ENCODE measurements at regions of chr10 and their contacts with region 1.

Region 1: GRCh38 chr10:61903221-61903927 is 1.9 kb downstream of the ARID5B start:
- DNase-seq: peak; percentile 42 to 84 (median 62)
- ATAC-seq: peak; percentile 33
- H3K4me3 ChIP-seq: peak overlapping the region; percentile 92
- H3K4me3 Mint-ChIP-seq: peak overlapping the region; percentile 94
- H3K27ac ChIP-seq: peak overlapping the region; percentile 92 to 98
- H3K27ac Mint-ChIP-seq: peak overlapping the region; percentile 91
- H3K4me1 ChIP-seq: peaks cover 4% of the 10 kb centered on the region
- H3K4me1 Mint-ChIP-seq: peaks cover 51% of the 10 kb centered on the region
- H3K27me3 ChIP-seq: no peaks in the 10 kb centered on the region
- H3K27me3 Mint-ChIP-seq: no peaks in the 10 kb centered on the region
- CTCF ChIP-seq: peak; percentile 49

Region 2: GRCh38 chr10:61750929-61751471 is 152.4 kb before region 1 on chr10:
- CTCF ChIA-PET with region 1: interaction called, 7 read pairs
- POLR2A ChIA-PET with region 1: interaction called, 9 read pairs
- intact Hi-C with region 1: loop called in 1 of 2 experiments (anchors 5 kb)
- DNase-seq: peak; percentile 45 to 83 (median 58)
- ATAC-seq: peak; percentile 97
- H3K4me3 ChIP-seq: no peak overlapping the region
- H3K4me3 Mint-ChIP-seq: peak overlapping the region; percentile 18
- H3K27ac ChIP-seq: no peak overlapping the region
- H3K27ac Mint-ChIP-seq: no peak overlapping the region
- H3K4me1 ChIP-seq: peaks cover 14% of the 10 kb centered on the region
- H3K4me1 Mint-ChIP-seq: peaks cover 29% of the 10 kb centered on the region
- H3K27me3 ChIP-seq: no peaks in the 10 kb centered on the region
- H3K27me3 Mint-ChIP-seq: no peaks in the 10 kb centered on the region
- CTCF ChIP-seq: peak; percentile 75

Region 3: GRCh38 chr10:61921143-61921542 is 17.8 kb after region 1 on chr10:
- CTCF ChIA-PET with region 1: interaction called, 3 read pairs
- POLR2A ChIA-PET with region 1: interaction called, 20 read pairs
- intact Hi-C with region 1: no loop called
- DNase-seq: no peak
- ATAC-seq: no peak
- H3K4me3 ChIP-seq: no peak overlapping the region
- H3K4me3 Mint-ChIP-seq: no peak overlapping the region
- H3K27ac ChIP-seq: no peak overlapping the region
- H3K27ac Mint-ChIP-seq: no peak overlapping the region
- H3K4me1 ChIP-seq: peaks cover 19% of the 10 kb centered on the region
- H3K4me1 Mint-ChIP-seq: peaks cover 72% of the 10 kb centered on the region
- H3K27me3 ChIP-seq: no peaks in the 10 kb centered on the region
- H3K27me3 Mint-ChIP-seq: no peaks in the 10 kb centered on the region
- CTCF ChIP-seq: no peak

Region 4: DNA sequence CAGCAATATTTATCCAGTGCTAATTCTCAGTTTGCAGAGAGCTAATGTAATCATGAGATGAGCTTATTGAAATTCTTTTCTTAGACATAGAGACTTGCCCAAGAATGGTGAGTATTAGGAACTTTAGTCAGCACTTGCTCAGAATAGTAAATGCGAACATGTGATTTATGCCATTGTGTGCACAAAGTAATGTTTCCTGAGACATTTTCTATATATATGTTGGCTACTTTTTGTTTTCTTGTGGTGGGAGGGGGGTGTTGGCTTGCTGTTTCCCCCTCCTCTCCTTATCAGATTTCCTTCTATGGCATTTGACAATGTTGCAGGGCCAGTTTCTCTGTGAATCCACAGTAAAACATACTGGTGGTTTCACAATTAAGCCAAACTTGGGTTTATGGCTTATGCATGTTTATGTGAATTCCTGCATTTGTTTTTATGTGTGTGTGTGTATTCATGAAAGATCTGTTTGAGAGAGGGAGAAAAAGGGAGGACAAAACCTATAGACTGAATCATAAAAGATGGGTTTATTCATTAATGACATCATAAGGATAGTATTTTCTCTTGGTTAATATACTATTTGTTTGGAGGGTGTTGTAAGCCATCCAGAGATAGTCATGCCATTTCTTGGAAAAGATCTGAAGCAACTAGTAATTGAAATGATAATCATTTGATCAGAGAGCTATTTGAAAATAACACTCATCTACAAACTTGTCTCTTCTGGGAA is 34.4 kb after region 1 on chr10:
- CTCF ChIA-PET with region 1: interaction called, 8 read pairs
- POLR2A ChIA-PET with region 1: interaction called, 28 read pairs
- intact Hi-C with region 1: loop called in 1 of 2 experiments (anchors 2 kb)
- DNase-seq: no peak
- ATAC-seq: no peak
- H3K4me3 ChIP-seq: no peak overlapping the region
- H3K4me3 Mint-ChIP-seq: no peak overlapping the region
- H3K27ac ChIP-seq: peak overlapping the region in 1 of 2 donors; percentile 46
- H3K27ac Mint-ChIP-seq: peak overlapping the region; percentile 82
- H3K4me1 ChIP-seq: peaks cover 40% of the 10 kb centered on the region
- H3K4me1 Mint-ChIP-seq: peaks cover 83% of the 10 kb centered on the region
- H3K27me3 ChIP-seq: no peaks in the 10 kb centered on the region
- H3K27me3 Mint-ChIP-seq: no peaks in the 10 kb centered on the region
- CTCF ChIP-seq: no peak

Region 5: GRCh38 chr10:61987951-61988379 is 84.6 kb after region 1 on chr10:
- CTCF ChIA-PET with region 1: interaction called, 14 read pairs
- POLR2A ChIA-PET with region 1: interaction called, 51 read pairs
- intact Hi-C with region 1: loop called (anchors 1 to 5 kb)
- DNase-seq: peak in 3 of 14 experiments; percentile 61 to 70 (median 63)
- ATAC-seq: peak; percentile 59
- H3K4me3 ChIP-seq: peak overlapping the region; percentile 17
- H3K4me3 Mint-ChIP-seq: peak overlapping the region; percentile 18
- H3K27ac ChIP-seq: peak overlapping the region in 1 of 2 donors; percentile 47
- H3K27ac Mint-ChIP-seq: peak overlapping the region; percentile 78
- H3K4me1 ChIP-seq: peaks cover 24% of the 10 kb centered on the region
- H3K4me1 Mint-ChIP-seq: peaks cover 68% of the 10 kb centered on the region
- H3K27me3 ChIP-seq: no peaks in the 10 kb centered on the region
- H3K27me3 Mint-ChIP-seq: no peaks in the 10 kb centered on the region
- CTCF ChIP-seq: no peak

Region 6: DNA sequence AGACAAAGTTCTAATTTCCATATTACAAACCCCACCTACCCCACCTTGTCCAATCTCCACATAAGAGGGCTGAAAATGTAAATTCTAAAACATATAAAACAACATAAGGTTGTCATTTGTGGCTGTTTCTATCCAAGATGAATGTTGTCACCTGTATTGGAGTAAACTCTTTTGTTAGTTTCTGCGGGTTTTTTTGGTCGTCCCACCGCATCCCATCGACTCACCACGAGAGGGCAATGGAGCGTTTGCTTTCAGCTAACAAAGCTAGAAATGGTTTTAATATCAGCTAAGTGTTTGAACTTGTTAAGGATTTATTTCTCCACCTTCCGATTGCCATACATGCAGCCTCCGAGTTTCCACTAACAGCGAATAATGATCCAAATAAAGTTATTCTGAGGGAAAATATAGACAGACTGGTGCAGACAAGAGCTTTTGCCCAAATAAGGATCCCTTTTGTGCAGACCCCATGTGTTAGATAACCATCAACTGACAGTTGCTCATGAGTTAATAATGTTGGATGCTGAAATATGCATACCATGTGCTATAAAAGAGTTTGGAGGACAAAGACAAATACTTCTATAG is 135.3 kb after region 1 on chr10:
- CTCF ChIA-PET with region 1: interaction called, 20 read pairs
- POLR2A ChIA-PET with region 1: interaction called, 103 read pairs
- intact Hi-C with region 1: loop called (anchors 5 kb)
- DNase-seq: peak; percentile 65 to 88 (median 72)
- ATAC-seq: peak; percentile 84
- H3K4me3 ChIP-seq: peak overlapping the region; percentile 29
- H3K4me3 Mint-ChIP-seq: peak overlapping the region; percentile 72
- H3K27ac ChIP-seq: no peak overlapping the region
- H3K27ac Mint-ChIP-seq: peak overlapping the region; percentile 68
- H3K4me1 ChIP-seq: peaks cover 54% of the 10 kb centered on the region
- H3K4me1 Mint-ChIP-seq: peaks cover 87% of the 10 kb centered on the region
- H3K27me3 ChIP-seq: no peaks in the 10 kb centered on the region
- H3K27me3 Mint-ChIP-seq: no peaks in the 10 kb centered on the region
- CTCF ChIP-seq: peak; percentile 82

Region 7: GRCh38 chr10:62183442-62183841 is 280.1 kb after region 1 on chr10:
- CTCF ChIA-PET with region 1: interaction called, 3 read pairs
- POLR2A ChIA-PET with region 1: interaction called, 27 read pairs
- intact Hi-C with region 1: loop called in 1 of 2 experiments (anchors 1 kb)
- DNase-seq: peak in 10 of 14 experiments; percentile 16 to 92 (median 37)
- ATAC-seq: peak; percentile 85
- H3K4me3 ChIP-seq: no peak overlapping the region
- H3K4me3 Mint-ChIP-seq: peak overlapping the region; percentile 21
- H3K27ac ChIP-seq: peak overlapping the region; percentile 37 to 38
- H3K27ac Mint-ChIP-seq: peak overlapping the region; percentile 86
- H3K4me1 ChIP-seq: peaks cover 45% of the 10 kb centered on the region
- H3K4me1 Mint-ChIP-seq: peaks cover 91% of the 10 kb centered on the region
- H3K27me3 ChIP-seq: no peaks in the 10 kb centered on the region
- H3K27me3 Mint-ChIP-seq: no peaks in the 10 kb centered on the region
- CTCF ChIP-seq: no peak

Measured in CD4-positive, alpha-beta T cell (primary cell).